ENCODE measurements at regions of chr15 and their contacts with region 1.

Region 1: GRCh38 chr15:36933255-36933990 is 166.9 kb downstream of the MEIS2 start:
- DNase-seq: no peak
- ATAC-seq: peak; percentile 67
- H3K4me3 ChIP-seq: no peak overlapping the region
- H3K27ac ChIP-seq: no peak overlapping the region
- H3K4me1 ChIP-seq: no peaks in the 10 kb centered on the region
- H3K27me3 ChIP-seq: no peaks in the 10 kb centered on the region
- CTCF ChIP-seq: no peak
- EP300 ChIP-seq: no peak
- POLR2A ChIP-seq: no peak
- RAD21 ChIP-seq: no peak

Region 2: GRCh38 chr15:36778531-36778930 is 154.9 kb before region 1 on chr15:
- CTCF ChIA-PET with region 1: no interaction called
- POLR2A ChIA-PET with region 1: no interaction called
- RAD21 ChIA-PET with region 1: no interaction called
- SMC1A ChIA-PET with region 1: no interaction called
- in situ Hi-C with region 1: no loop called
- intact Hi-C with region 1: no loop called
- DNase-seq: no peak
- ATAC-seq: no peak
- H3K4me3 ChIP-seq: no peak overlapping the region
- H3K27ac ChIP-seq: no peak overlapping the region
- H3K4me1 ChIP-seq: no peaks in the 10 kb centered on the region
- H3K27me3 ChIP-seq: no peaks in the 10 kb centered on the region
- CTCF ChIP-seq: no peak
- EP300 ChIP-seq: no peak
- POLR2A ChIP-seq: no peak
- RAD21 ChIP-seq: no peak

Region 3: DNA sequence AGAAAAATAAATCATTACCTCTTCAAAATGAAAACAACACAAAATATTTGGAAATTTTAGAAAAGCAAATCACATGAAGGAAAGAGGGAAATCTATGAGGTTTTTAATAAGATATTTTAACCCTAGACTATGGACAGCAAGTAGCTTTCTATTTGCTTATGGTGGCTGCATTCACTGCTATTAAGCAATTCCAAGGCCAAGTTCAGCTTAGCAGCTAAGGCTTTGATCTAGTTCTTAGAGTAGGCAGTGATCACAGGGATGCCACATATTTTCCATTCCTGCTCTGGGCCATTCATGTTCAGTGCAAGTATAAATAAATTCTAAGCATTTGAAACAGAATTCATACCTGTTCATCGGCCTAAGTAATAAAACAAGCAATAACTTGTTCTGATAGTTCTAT is 118.7 kb before region 1 on chr15:
- CTCF ChIA-PET with region 1: no interaction called
- POLR2A ChIA-PET with region 1: no interaction called
- RAD21 ChIA-PET with region 1: no interaction called
- SMC1A ChIA-PET with region 1: no interaction called
- in situ Hi-C with region 1: no loop called
- intact Hi-C with region 1: no loop called
- DNase-seq: no peak
- ATAC-seq: no peak
- H3K4me3 ChIP-seq: no peak overlapping the region
- H3K27ac ChIP-seq: no peak overlapping the region
- H3K4me1 ChIP-seq: no peaks in the 10 kb centered on the region
- H3K27me3 ChIP-seq: no peaks in the 10 kb centered on the region
- CTCF ChIP-seq: no peak
- EP300 ChIP-seq: no peak
- POLR2A ChIP-seq: no peak
- RAD21 ChIP-seq: no peak

Region 4: DNA sequence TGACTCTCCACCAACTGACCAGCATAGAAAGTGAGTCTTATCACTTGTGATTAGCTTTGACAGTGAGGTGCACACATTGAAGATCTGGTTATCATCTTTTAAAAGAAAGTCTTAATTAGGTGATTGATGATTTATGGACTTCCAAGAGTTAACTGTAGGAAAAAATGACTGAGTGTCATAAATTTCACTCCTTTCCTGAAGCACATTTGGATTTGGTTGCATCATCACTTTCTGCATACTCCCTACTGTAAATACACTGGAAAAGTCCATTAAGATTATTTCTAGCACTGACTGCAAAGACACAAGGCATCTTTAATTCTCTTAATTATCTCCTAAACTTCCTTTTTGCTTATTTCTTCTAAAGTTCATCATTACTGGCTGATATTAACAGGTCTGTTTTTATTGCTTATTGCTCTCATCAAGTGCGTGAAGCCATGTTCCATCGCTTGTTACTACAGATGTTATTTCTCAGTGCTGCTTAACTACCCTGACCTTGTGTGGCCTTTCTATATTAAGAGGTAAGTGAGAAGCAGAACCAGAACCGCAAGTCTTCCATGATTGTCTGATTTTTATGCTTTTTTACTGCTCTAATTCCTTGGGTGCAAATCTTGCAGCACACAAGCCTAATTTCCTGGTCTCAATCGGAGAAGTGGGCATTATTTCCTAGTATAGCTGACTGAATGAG is 13.8 kb after region 1 on chr15:
- CTCF ChIA-PET with region 1: interaction called, 4 read pairs
- POLR2A ChIA-PET with region 1: interaction called, 3 read pairs
- RAD21 ChIA-PET with region 1: interaction called, 5 read pairs
- SMC1A ChIA-PET with region 1: interaction called, 10 read pairs
- in situ Hi-C with region 1: no loop called
- intact Hi-C with region 1: no loop called
- DNase-seq: no peak
- ATAC-seq: no peak
- H3K4me3 ChIP-seq: no peak overlapping the region
- H3K27ac ChIP-seq: no peak overlapping the region
- H3K4me1 ChIP-seq: no peaks in the 10 kb centered on the region
- H3K27me3 ChIP-seq: no peaks in the 10 kb centered on the region
- CTCF ChIP-seq: no peak
- EP300 ChIP-seq: no peak
- POLR2A ChIP-seq: no peak
- RAD21 ChIP-seq: no peak